Activated CD4-positive, alpha-beta T cell treated with anti-CD3 and anti-CD28 coated beads, Interleukin-2, amount 10 ng/mL, durations not matched to agents 7 days and 5 days (primary cell): ENCODE measurements at regions of chr19 and their contacts with region 1.

Region 1: GRCh38 chr19:43595999-43596841 is at the starts of genes IRGQ and ZNF576:
- DNase-seq: peak; percentile 100
- H3K4me3 Mint-ChIP-seq: peak within 1 kb of the TSS; percentile 88
- H3K27ac Mint-ChIP-seq: peak within 1 kb of the TSS; percentile 99
- H3K4me1 Mint-ChIP-seq: peaks cover 34% of the 10 kb centered on the region
- H3K27me3 Mint-ChIP-seq: no peaks in the 10 kb centered on the region
- total RNA-seq, gene IRGQ: 9.0 to 9.7 TPM
- total RNA-seq, gene ZNF576: 14.1 to 14.9 TPM

Region 2: GRCh38 chr19:43446746-43447489 is 149.3 kb before region 1 on chr19:
- CTCF ChIA-PET with region 1: interaction called, 23 read pairs
- POLR2A ChIA-PET with region 1: no interaction called
- DNase-seq: peak; percentile 85
- H3K4me3 Mint-ChIP-seq: no peak overlapping the region
- H3K27ac Mint-ChIP-seq: no peak overlapping the region
- H3K4me1 Mint-ChIP-seq: peaks cover 39% of the 10 kb centered on the region
- H3K27me3 Mint-ChIP-seq: no peaks in the 10 kb centered on the region

Region 3: DNA sequence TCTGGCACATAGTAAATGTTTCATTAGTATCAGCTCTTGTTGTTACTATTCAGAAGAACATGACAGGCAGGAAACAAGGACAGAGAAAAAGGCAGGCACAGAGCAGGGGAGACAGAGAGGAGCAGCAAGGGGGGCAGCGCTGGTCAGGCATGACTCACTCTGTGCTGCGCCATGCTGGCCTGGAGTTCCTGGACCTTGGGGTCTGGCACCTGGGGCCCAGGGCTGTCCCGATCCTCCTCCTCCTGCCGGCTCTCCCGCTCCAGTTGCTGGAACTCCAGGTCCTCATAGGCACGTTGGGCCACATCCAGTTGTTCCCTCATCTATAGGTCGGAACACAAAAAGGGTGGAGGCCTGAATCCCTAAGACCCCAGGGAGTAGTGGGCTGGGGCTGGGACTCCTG is 99.3 kb before region 1 on chr19:
- CTCF ChIA-PET with region 1: no interaction called
- POLR2A ChIA-PET with region 1: no interaction called
- DNase-seq: no peak
- H3K4me3 Mint-ChIP-seq: no peak overlapping the region
- H3K27ac Mint-ChIP-seq: no peak overlapping the region
- H3K4me1 Mint-ChIP-seq: peaks cover 2% of the 10 kb centered on the region
- H3K27me3 Mint-ChIP-seq: no peaks in the 10 kb centered on the region

Region 4: GRCh38 chr19:43524922-43525835 is 71.0 kb before region 1 on chr19:
- CTCF ChIA-PET with region 1: interaction called, 20 read pairs
- POLR2A ChIA-PET with region 1: no interaction called
- DNase-seq: peak; percentile 43
- H3K4me3 Mint-ChIP-seq: peak overlapping the region; percentile 95
- H3K27ac Mint-ChIP-seq: peak overlapping the region; percentile 95
- H3K4me1 Mint-ChIP-seq: peaks cover 28% of the 10 kb centered on the region
- H3K27me3 Mint-ChIP-seq: no peaks in the 10 kb centered on the region

Region 5: GRCh38 chr19:43555185-43555770 is 40.9 kb before region 1 on chr19:
- CTCF ChIA-PET with region 1: interaction called, 51 read pairs
- POLR2A ChIA-PET with region 1: interaction called, 5 read pairs
- DNase-seq: peak; percentile 91
- H3K4me3 Mint-ChIP-seq: no peak overlapping the region
- H3K27ac Mint-ChIP-seq: peak overlapping the region; percentile 68
- H3K4me1 Mint-ChIP-seq: peaks cover 11% of the 10 kb centered on the region
- H3K27me3 Mint-ChIP-seq: no peaks in the 10 kb centered on the region

Region 6: GRCh38 chr19:43570174-43570791 is 25.9 kb before region 1 on chr19:
- CTCF ChIA-PET with region 1: interaction called, 12 read pairs
- POLR2A ChIA-PET with region 1: no interaction called
- DNase-seq: no peak
- H3K4me3 Mint-ChIP-seq: no peak overlapping the region
- H3K27ac Mint-ChIP-seq: no peak overlapping the region
- H3K4me1 Mint-ChIP-seq: peaks cover 26% of the 10 kb centered on the region
- H3K27me3 Mint-ChIP-seq: no peaks in the 10 kb centered on the region

Region 7: GRCh38 chr19:43606569-43607229 is 10.5 kb after region 1 on chr19:
- CTCF ChIA-PET with region 1: interaction called, 15 read pairs
- POLR2A ChIA-PET with region 1: no interaction called
- DNase-seq: no peak
- H3K4me3 Mint-ChIP-seq: no peak overlapping the region
- H3K27ac Mint-ChIP-seq: no peak overlapping the region
- H3K4me1 Mint-ChIP-seq: peaks cover 3% of the 10 kb centered on the region
- H3K27me3 Mint-ChIP-seq: no peaks in the 10 kb centered on the region